ENCODE measurements at regions of chr12 and their contacts with region 1.

Region 1: DNA sequence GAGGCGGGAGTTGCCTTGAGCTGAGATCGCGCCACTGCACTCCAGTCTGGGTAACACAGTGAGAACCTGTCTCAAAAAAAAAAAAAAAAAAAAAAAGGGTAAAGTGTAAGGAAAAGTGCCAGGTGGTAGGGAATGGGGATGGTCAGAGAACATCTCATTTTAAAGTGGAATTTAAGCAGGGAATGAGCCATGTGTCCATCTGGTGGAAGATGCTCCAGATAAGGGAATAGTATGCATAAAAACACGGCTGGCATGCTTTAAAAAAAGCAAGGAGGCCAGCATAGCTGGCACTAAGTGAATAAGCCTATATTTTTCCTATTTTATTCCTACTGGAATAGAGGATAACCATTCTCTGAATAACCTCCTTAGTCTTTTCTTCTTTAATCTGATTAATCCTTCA is 33.7 kb downstream of the FAM186A start:
- DNase-seq: no peak
- ATAC-seq: no peak
- H3K4me3 ChIP-seq: no peak overlapping the region
- H3K27ac ChIP-seq: no peak overlapping the region
- H3K4me1 ChIP-seq: no peaks in the 10 kb centered on the region
- H3K27me3 ChIP-seq: no peaks in the 10 kb centered on the region
- CTCF ChIP-seq: no peak

Region 2: GRCh38 chr12:50282721-50283228 is 79.9 kb before region 1 on chr12:
- CTCF ChIA-PET with region 1: no interaction called
- POLR2A ChIA-PET with region 1: interaction called, 10 read pairs
- in situ Hi-C with region 1: no loop called
- intact Hi-C with region 1: no loop called
- DNase-seq: no peak
- ATAC-seq: peak; percentile 76
- H3K4me3 ChIP-seq: peak overlapping the region; percentile 95 to 98
- H3K27ac ChIP-seq: peak overlapping the region; percentile 88
- H3K4me1 ChIP-seq: peaks cover 44% of the 10 kb centered on the region
- H3K27me3 ChIP-seq: no peaks in the 10 kb centered on the region
- CTCF ChIP-seq: no peak

Measured in Panc1 (cell line).